ENCODE measurements at regions of chr3 and their contacts with region 1.

Region 1: DNA sequence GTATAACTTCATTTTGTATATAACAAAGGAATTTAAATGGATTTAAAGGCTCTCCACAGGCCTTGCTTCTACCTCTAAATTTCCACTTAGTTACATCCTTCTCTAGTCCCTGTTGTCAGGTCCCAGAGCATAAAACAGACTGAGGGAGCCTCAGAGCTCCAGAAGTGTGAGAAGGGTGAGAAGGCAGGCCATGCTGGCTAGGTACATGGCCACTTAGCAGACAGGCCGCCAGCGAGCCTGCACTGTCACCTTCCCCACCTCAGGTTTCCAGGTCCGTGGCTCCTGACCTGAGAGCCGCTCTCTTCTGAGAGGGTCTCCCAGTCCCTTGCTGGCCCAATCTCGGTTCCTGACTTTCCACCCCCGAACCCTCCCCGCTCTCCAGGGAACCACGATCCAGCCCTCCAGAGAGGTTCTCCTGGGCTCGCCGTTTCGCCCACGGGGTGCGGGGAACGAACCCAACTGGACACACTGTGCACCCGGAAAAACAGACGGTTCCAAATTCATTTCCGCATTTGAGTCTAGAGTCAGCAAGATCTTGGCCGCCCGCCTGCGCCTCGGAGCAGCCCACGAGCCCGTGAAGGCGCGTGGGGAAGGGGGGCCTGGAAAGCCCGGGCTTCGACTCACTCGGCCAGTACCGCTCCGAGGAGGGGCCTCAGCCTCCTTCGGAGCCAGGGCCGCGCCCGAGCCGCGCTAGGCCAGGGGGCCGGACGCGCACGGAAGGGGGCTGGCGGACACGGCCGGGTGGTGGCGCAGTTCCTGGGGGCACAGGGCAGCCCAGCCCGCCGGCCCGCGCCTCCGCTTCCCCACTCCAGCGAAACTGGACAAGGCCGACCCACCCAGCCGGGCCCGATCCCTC is 16.7 kb upstream of the SOX2 start:
- DNase-seq: peak in 9 of 10 donors; percentile 42 to 95 (median 72)

Region 2: GRCh38 chr3:181610083-181610972 is 84.7 kb before region 1 on chr3:
- intact Hi-C with region 1: loop called (anchors 2 kb)
- DNase-seq: no peak

Region 3: GRCh38 chr3:182412065-182412464 is 717.0 kb after region 1 on chr3:
- intact Hi-C with region 1: no loop called
- DNase-seq: no peak